AG04450 (cell line): ENCODE measurements at regions of chr11 and their contacts with region 1.

Region 1: GRCh38 chr11:12963792-12964536 is 45.2 kb upstream of the RASSF10 start:
- DNase-seq: peak; percentile 11
- H3K4me3 ChIP-seq: no peak overlapping the region
- H3K27ac ChIP-seq: no peak overlapping the region
- H3K27me3 ChIP-seq: peaks cover 6% of the 10 kb centered on the region
- CTCF ChIP-seq: peak; percentile 89

Region 2: DNA sequence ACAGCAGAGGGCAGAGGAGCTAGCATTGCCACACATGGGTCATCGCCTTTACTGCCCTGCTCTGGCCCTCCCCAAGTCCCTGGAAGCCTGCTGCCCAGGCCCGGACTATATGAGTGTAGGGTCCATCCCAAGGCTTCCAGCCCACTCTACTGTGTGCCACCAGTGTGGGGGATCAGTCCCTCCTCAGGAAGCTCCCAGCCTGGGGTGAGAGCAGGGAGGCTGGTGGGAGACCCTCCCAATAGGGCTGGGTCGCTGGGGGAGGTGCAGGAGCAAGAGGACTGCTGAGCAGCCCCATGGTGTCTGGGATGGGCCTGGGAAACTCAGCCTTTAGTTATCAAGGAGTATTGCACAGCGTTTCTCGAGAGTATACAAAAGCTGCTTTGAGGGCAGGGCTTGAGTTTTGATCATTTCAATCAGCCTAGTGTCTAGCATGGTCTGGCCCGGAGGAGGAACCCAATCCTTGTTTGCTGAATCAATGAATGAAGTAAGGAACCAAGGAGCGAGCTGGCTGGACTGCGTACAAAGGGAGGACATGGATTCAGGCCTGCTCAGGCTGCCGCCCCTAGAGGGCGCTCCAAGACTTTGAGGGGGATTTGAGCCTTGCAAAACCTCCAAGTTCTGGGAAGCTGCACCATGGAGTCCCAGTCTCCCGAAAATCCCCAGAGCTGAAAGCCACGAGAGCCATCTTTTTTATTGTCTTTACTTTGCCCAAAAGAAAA is 675.6 kb before region 1 on chr11:
- CTCF ChIA-PET with region 1: interaction called, 31 read pairs
- POLR2A ChIA-PET with region 1: interaction called, 6 read pairs
- DNase-seq: peak; percentile 87
- H3K4me3 ChIP-seq: peak overlapping the region; percentile 10; the same call in 1 of the 2 replicates
- H3K27ac ChIP-seq: peak overlapping the region; percentile 99
- H3K27me3 ChIP-seq: no peaks in the 10 kb centered on the region
- CTCF ChIP-seq: peak; percentile 99

Region 3: GRCh38 chr11:13152736-13153533 is 189.0 kb after region 1 on chr11:
- CTCF ChIA-PET with region 1: interaction called, 179 read pairs
- POLR2A ChIA-PET with region 1: no interaction called
- DNase-seq: no peak
- H3K4me3 ChIP-seq: no peak overlapping the region
- H3K27ac ChIP-seq: no peak overlapping the region
- H3K27me3 ChIP-seq: peaks cover 4% of the 10 kb centered on the region
- CTCF ChIP-seq: peak; percentile 64

Region 4: GRCh38 chr11:13183094-13183825 is 219.3 kb after region 1 on chr11:
- CTCF ChIA-PET with region 1: interaction called, 70 read pairs
- POLR2A ChIA-PET with region 1: no interaction called
- DNase-seq: no peak
- H3K4me3 ChIP-seq: peak overlapping the region; percentile 42
- H3K27ac ChIP-seq: no peak overlapping the region
- H3K27me3 ChIP-seq: no peaks in the 10 kb centered on the region
- CTCF ChIP-seq: peak; percentile 54

Region 5: DNA sequence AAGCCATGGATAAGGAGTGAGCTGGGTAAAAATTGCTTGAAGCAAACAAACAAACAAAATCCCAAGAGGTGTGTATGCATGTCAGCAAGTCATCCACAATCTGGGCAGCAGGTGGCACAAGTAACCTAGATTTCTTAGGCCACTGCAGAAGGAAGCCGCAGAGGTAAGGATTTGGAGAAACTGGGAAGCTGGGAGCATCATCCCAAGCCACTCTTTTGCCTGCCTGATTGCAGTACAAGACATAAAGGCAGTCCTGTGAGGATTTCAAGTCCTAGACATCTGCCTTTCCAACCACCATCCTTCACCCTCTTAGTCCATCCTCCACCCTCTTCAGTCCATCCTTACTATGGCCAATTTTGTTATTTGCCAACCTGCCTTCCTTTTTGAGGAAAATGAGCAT is 246.5 kb after region 1 on chr11:
- CTCF ChIA-PET with region 1: interaction called, 12 read pairs
- POLR2A ChIA-PET with region 1: no interaction called
- DNase-seq: peak; percentile 63
- H3K4me3 ChIP-seq: no peak overlapping the region
- H3K27ac ChIP-seq: no peak overlapping the region
- H3K27me3 ChIP-seq: no peaks in the 10 kb centered on the region
- CTCF ChIP-seq: peak; percentile 74

Region 6: GRCh38 chr11:13343931-13344717 is 380.2 kb after region 1 on chr11:
- CTCF ChIA-PET with region 1: interaction called, 19 read pairs
- POLR2A ChIA-PET with region 1: no interaction called
- DNase-seq: peak; percentile 47
- H3K4me3 ChIP-seq: no peak overlapping the region
- H3K27ac ChIP-seq: no peak overlapping the region
- H3K27me3 ChIP-seq: no peaks in the 10 kb centered on the region
- CTCF ChIP-seq: peak; percentile 88

Region 7: DNA sequence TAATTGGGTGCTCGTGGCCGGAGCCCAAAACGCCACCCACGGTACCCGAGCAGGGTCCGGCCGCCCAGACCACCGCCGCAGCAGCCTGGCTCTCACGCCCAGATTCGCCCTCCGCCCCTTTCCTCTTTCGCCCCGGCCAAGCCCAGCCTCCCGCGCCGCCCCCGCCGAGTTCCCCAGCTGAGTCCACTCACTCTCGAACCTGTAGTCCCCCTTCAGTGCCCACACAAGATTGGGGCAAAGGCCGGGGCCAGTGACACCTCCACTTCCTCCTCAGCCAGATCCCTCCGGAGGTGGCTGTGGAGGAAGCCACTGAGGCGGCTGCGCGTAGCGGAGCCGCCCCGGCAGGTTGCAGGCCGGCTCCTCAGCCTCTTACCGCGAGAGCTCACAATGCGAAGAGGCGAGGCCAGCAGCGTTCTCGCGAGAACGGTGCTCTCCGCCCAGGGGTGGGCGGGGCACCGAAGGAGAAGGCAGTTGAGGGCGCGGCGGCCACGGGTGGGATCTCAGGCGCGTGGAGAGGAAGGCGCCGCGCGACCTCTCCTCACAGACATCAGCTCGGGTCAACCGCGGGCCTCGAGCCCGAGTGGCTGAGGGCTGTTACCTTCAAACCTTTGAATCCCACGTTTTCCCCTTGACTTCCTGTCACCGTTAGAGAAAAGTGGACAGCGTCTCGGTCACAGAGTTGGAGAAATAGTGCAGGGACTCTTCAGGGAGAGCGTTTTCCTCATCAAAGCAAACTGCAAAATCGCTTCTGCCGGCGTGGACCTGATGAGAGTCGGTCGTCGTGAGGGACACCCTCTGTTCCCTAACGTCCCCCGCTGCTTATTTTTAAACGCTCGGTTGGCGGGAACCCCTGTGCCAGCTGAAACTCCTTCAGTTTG is 499.2 kb after region 1 on chr11 and contains the start of gene BTBD10:
- CTCF ChIA-PET with region 1: interaction called, 13 read pairs
- POLR2A ChIA-PET with region 1: no interaction called
- DNase-seq: peak; percentile 88
- H3K4me3 ChIP-seq: peak within 1 kb of the TSS; percentile 86
- H3K27ac ChIP-seq: peak within 1 kb of the TSS; percentile 72
- H3K27me3 ChIP-seq: peaks cover 6% of the 10 kb centered on the region
- CTCF ChIP-seq: no peak
- polyA plus RNA-seq, gene BTBD10: 50.2 and 60.8 TPM in 2 replicates